Naive thymus-derived CD4-positive, alpha-beta T cell (primary cell): ENCODE measurements at regions of chr9 and their contacts with region 1.

Region 1: GRCh38 chr9:137423004-137423874 is at the starts of genes EXD3 and NOXA1:
- DNase-seq: peak; percentile 84 to 99 (median 91)
- ATAC-seq: peak; percentile 97
- H3K4me3 ChIP-seq: peak within 1 kb of the TSS; percentile 65
- H3K4me3 Mint-ChIP-seq: peak within 1 kb of the TSS; percentile 76 to 90 (median 82)
- H3K27ac ChIP-seq: peak within 1 kb of the TSS; percentile 62
- H3K27ac Mint-ChIP-seq: peak within 1 kb of the TSS; percentile 28 to 91 (median 66)
- H3K4me1 ChIP-seq: peaks cover 0 to 5% of the 10 kb centered on the region in 2 donors
- H3K4me1 Mint-ChIP-seq: peaks cover 2 to 21% (median 13%) of the 10 kb centered on the region in 7 donors
- H3K27me3 ChIP-seq: no peaks in the 10 kb centered on the region
- H3K27me3 Mint-ChIP-seq: peaks cover 0 to 9% (median 0%) of the 10 kb centered on the region in 5 donors
- total RNA-seq, gene EXD3: 11.7 to 27.2 (median 24.7) TPM
- total RNA-seq, gene NOXA1: 0.94 to 11.1 (median 6.0) TPM

Region 2: GRCh38 chr9:137453643-137454081 is 30.4 kb after region 1 on chr9:
- CTCF ChIA-PET with region 1: no interaction called
- POLR2A ChIA-PET with region 1: interaction called, 4 read pairs
- intact Hi-C with region 1: loop called in 1 of 2 experiments (anchors 1 kb)
- DNase-seq: peak; percentile 51 to 76 (median 67)
- ATAC-seq: peak; percentile 80
- H3K4me3 ChIP-seq: no peak overlapping the region
- H3K4me3 Mint-ChIP-seq: peak overlapping the region in 9 of 10 donors; percentile 39 to 79 (median 65)
- H3K27ac ChIP-seq: no peak overlapping the region
- H3K27ac Mint-ChIP-seq: peak overlapping the region in 4 of 9 donors; percentile 48 to 83 (median 60)
- H3K4me1 ChIP-seq: peaks cover 27 to 48% of the 10 kb centered on the region in 2 donors
- H3K4me1 Mint-ChIP-seq: peaks cover 5 to 72% (median 40%) of the 10 kb centered on the region in 7 donors
- H3K27me3 ChIP-seq: no peaks in the 10 kb centered on the region
- H3K27me3 Mint-ChIP-seq: no peaks in the 10 kb centered on the region

Region 3: DNA sequence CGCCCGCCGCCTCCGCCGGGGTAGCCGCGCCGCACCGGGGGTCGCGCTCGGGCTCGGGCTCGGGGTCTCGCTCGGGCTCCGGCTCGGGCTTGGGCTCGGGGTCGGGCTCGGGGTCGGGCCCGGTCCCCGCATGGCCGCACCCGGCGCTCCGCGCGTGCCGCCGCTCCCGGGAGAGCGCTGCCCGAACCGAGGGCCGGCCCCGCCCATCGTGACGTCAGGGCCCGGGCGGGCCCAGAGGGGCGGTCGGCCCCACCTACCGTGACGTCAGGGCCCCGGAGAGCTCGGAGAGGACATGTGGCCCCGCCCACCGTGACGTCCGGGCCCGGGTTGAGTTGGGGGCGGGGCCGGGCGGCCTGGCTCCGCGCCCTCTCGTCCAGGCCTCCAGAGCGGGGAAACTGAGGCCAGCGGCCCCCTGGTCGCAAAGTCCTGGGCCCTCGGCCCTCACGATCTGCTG is 35.9 kb after region 1 on chr9 and contains the start of gene NSMF:
- CTCF ChIA-PET with region 1: no interaction called
- POLR2A ChIA-PET with region 1: interaction called, 4 read pairs
- intact Hi-C with region 1: loop called (anchors 1 kb)
- DNase-seq: peak; percentile 90 to 99 (median 95)
- ATAC-seq: peak; percentile 89
- H3K4me3 ChIP-seq: peak within 1 kb of the TSS; percentile 67
- H3K4me3 Mint-ChIP-seq: peak within 1 kb of the TSS; percentile 55 to 79 (median 68)
- H3K27ac ChIP-seq: peak within 1 kb of the TSS; percentile 93
- H3K27ac Mint-ChIP-seq: peak within 1 kb of the TSS; percentile 28 to 98 (median 91)
- H3K4me1 ChIP-seq: peaks cover 36 to 54% of the 10 kb centered on the region in 2 donors
- H3K4me1 Mint-ChIP-seq: peaks cover 0 to 55% (median 33%) of the 10 kb centered on the region in 7 donors
- H3K27me3 ChIP-seq: no peaks in the 10 kb centered on the region
- H3K27me3 Mint-ChIP-seq: no peaks in the 10 kb centered on the region
- total RNA-seq, gene NSMF: 22.9 to 92.0 (median 57.3) TPM